CD4-positive, alpha-beta T cell (primary cell): ENCODE measurements at regions of chr20 and their contacts with region 1.

Region 1: GRCh38 chr20:8389381-8390036 is 257.4 kb downstream of the PLCB1 start:
- DNase-seq: peak in 3 of 14 experiments; percentile 42 to 63 (median 58)
- ATAC-seq: no peak
- H3K4me3 ChIP-seq: no peak overlapping the region
- H3K4me3 Mint-ChIP-seq: no peak overlapping the region
- H3K27ac ChIP-seq: no peak overlapping the region
- H3K27ac Mint-ChIP-seq: no peak overlapping the region
- H3K4me1 ChIP-seq: no peaks in the 10 kb centered on the region
- H3K4me1 Mint-ChIP-seq: peaks cover 4% of the 10 kb centered on the region
- H3K27me3 ChIP-seq: no peaks in the 10 kb centered on the region
- H3K27me3 Mint-ChIP-seq: no peaks in the 10 kb centered on the region
- CTCF ChIP-seq: peak; percentile 70

Region 2: GRCh38 chr20:7935027-7935551 is 454.4 kb before region 1 on chr20:
- CTCF ChIA-PET with region 1: no interaction called
- POLR2A ChIA-PET with region 1: no interaction called
- intact Hi-C with region 1: loop called in 1 of 2 experiments (anchors 10 kb)
- DNase-seq: no peak
- ATAC-seq: no peak
- H3K4me3 ChIP-seq: no peak overlapping the region
- H3K4me3 Mint-ChIP-seq: no peak overlapping the region
- H3K27ac ChIP-seq: no peak overlapping the region
- H3K27ac Mint-ChIP-seq: no peak overlapping the region
- H3K4me1 ChIP-seq: no peaks in the 10 kb centered on the region
- H3K4me1 Mint-ChIP-seq: no peaks in the 10 kb centered on the region
- H3K27me3 ChIP-seq: peaks cover 0 to 9% of the 10 kb centered on the region in 2 experiments
- H3K27me3 Mint-ChIP-seq: peaks cover 36% of the 10 kb centered on the region
- CTCF ChIP-seq: no peak

Region 3: DNA sequence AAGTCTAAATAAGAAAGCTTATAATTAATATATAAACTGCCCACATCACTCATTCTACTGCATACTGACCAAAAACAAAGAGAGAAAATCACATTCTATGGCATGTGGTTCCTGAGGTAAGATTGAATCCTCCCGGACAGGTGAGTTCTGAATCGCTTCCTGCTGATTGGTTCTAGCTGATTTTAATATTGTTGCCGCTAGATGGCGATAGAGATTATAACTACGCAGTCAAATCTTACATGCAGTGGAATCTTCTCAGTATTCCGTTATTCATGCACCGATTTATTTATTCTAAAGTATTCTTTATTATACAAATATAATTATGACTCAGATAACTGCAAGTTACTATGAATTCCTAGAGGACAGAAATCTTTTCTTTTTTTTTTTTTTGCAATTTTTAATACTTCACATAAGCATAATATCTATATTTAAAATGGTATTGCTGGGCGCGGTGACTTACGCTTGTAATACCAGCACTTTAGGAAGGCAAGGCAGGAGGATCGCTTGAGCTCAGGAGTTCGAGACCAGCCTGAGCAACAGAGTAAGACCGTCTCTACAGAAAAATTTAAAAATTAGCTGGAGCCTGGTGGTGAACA is 345.7 kb before region 1 on chr20:
- CTCF ChIA-PET with region 1: interaction called, 7 read pairs
- POLR2A ChIA-PET with region 1: interaction called, 5 read pairs
- intact Hi-C with region 1: loop called (anchors 1 to 2 kb)
- DNase-seq: peak in 4 of 14 experiments; percentile 39 to 82 (median 79)
- ATAC-seq: peak; percentile 85
- H3K4me3 ChIP-seq: no peak overlapping the region
- H3K4me3 Mint-ChIP-seq: no peak overlapping the region
- H3K27ac ChIP-seq: no peak overlapping the region
- H3K27ac Mint-ChIP-seq: no peak overlapping the region
- H3K4me1 ChIP-seq: no peaks in the 10 kb centered on the region
- H3K4me1 Mint-ChIP-seq: peaks cover 4% of the 10 kb centered on the region
- H3K27me3 ChIP-seq: peaks cover 0 to 7% of the 10 kb centered on the region in 2 experiments
- H3K27me3 Mint-ChIP-seq: peaks cover 9% of the 10 kb centered on the region
- CTCF ChIP-seq: peak; percentile 84

Region 4: DNA sequence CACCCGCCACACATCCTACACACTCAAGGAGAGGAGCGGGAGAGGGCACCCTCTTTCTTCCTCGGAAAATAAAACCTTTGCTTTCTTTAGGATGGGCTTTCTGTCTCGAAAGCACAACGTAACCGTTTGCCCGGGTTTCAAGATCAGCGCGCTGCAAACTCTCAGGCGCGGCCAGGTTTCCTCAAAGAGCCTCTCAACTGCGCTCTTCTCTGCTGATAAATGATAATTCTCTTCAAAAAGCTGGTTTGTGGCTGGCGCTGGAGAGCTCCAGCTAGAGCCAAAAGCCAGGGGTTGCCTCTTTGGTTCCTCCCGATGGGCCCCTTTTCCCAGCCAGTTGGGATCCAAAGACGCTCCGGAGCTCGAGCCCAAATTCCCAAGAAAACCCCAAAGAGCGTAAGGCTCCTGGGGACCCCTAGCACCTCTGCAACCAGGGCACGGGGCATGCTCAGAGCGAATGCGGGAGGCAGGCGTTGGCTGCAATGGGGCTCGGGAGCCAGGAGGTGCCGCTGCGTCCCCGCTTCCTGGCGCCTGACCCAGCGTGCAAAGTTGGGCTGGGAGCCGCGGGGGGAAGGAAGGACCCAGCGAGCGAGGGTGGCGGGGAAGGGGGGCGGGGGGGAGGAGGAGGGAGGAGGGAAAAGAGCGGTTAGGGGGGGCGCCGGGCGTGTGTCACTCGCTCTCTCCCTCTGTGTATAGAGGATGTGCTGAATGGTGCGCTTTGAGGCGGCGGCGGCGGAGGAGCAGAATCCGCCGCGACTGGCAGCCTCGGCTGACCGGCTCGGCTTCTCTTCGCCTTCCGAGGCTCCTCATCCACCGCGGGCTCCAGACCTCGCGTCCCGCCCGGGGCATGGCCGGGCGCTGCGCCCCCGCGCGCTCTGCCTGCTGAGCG is 257.7 kb before region 1 on chr20 and contains the start of gene PLCB1:
- CTCF ChIA-PET with region 1: interaction called, 4 read pairs
- POLR2A ChIA-PET with region 1: no interaction called
- intact Hi-C with region 1: loop called (anchors 1 kb)
- DNase-seq: peak; percentile 54 to 91 (median 68)
- ATAC-seq: peak; percentile 91
- H3K4me3 ChIP-seq: peak within 1 kb of the TSS; percentile 64
- H3K4me3 Mint-ChIP-seq: peak within 1 kb of the TSS; percentile 87
- H3K27ac ChIP-seq: no peak within 1 kb of the TSS
- H3K27ac Mint-ChIP-seq: peak within 1 kb of the TSS; percentile 45
- H3K4me1 ChIP-seq: peaks cover 14% of the 10 kb centered on the region
- H3K4me1 Mint-ChIP-seq: peaks cover 30% of the 10 kb centered on the region
- H3K27me3 ChIP-seq: peaks cover 0 to 6% of the 10 kb centered on the region in 2 experiments
- H3K27me3 Mint-ChIP-seq: peaks cover 42% of the 10 kb centered on the region
- CTCF ChIP-seq: peak; percentile 70
- total RNA-seq, gene PLCB1: 3.8 to 5.6 TPM